ENCODE measurements at regions of chr1 and their contacts with region 1.

Region 1: GRCh38 chr1:164794310-164794709 is 235.3 kb downstream of the PBX1 start:
- DNase-seq: no peak

Region 2: GRCh38 chr1:163410073-163410999 is 1384.0 kb before region 1 on chr1:
- intact Hi-C with region 1: loop called (anchors 10 kb)
- DNase-seq: no peak

Region 3: DNA sequence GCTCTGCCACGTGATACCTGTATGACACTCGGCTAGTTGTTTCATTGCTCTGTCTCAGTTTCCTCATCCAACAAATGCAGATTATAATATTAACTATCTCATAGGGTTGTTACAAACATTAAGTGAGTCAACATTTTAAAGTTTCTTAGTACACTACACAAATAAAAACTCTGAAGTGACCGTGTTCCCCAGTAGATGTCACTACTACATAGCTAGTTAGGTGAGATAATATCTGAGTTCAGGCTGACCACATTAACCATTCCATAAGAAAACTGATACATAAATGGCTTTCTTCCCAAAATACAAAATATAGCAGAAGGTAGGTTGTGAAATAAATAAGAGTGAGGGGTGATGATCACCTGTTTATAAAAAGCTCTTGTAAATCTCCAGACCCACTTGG is 1258.5 kb before region 1 on chr1:
- intact Hi-C with region 1: loop called (anchors 5 kb)
- DNase-seq: no peak

Region 4: DNA sequence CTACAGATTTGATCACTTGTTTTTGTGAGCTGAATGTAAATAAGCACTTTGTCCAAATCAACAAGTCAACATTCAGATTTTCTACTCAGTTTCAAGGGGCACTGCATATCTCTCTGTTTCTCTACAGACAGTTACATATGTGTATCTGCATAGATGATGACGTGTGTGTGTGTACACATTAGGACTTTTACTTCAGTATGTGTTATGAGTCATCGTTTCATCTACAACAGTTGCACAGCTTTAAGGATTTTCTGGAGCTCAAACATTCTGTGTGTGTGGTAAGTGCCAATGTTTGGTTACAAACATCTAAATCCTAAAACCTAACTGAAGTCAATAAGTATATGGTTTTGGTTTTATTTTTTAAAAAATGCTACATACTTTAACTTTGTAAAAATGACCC is 729.8 kb before region 1 on chr1:
- intact Hi-C with region 1: no loop called
- DNase-seq: no peak

Region 5: GRCh38 chr1:164558461-164559341 is 235.6 kb before region 1 on chr1 and contains the start of gene PBX1:
- intact Hi-C with region 1: no loop called
- DNase-seq: peak; percentile 97
- total RNA-seq, gene PBX1: 52.2 TPM

Region 6: DNA sequence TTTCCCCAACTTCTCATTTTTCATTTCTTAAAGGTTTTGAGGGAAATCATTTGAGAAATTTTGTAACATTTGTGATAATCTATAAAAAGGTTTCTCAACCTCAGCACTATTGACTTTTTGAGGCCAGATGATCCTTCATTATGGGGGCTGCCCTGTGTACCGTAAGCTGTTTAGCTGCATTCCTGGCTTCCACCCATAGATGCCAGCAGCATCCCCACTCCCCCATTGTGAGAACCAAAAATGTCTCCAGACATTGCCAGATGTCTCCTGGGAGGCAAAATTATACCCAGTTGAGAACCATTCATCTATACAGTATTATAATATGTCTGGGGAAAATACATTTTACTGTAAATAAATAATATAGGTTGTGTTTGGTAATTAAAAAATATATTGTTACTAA is 89.4 kb before region 1 on chr1:
- intact Hi-C with region 1: no loop called
- DNase-seq: no peak

Measured in cardiac septum (tissue), 1 donor.